Activated naive CD4-positive, alpha-beta T cell treated with anti-CD3 and anti-CD28 coated beads, Interleukin-2, amount 10 ng/mL, durations not matched to agents 7 days and 5 days (primary cell): ENCODE measurements at regions of chr21 and their contacts with region 1.

Region 1: DNA sequence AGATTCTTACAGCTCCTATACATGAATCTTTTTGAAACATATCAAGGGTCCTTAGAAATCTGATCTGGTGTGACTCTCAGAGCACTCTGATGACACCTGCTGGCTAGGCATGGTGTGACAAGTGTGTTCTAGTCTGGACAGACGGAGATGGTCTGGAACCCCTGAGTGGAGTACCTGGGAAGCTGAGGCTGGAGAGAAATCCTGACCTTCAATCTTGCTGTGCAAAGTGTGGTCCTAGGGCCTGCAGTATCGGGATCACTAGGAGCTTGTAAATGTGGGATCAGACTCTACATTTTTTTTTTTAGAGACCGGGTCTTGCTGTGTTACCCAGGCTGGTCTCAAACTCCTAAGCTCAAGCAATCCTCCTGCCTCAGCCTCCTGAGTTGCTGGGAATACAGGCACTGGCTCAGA is 78.6 kb upstream of the SOD1 start:
- DNase-seq: peak; percentile 84
- H3K4me3 Mint-ChIP-seq: no peak overlapping the region
- H3K27ac Mint-ChIP-seq: no peak overlapping the region
- H3K4me1 Mint-ChIP-seq: no peaks in the 10 kb centered on the region
- H3K27me3 Mint-ChIP-seq: peaks cover 25% of the 10 kb centered on the region

Region 2: DNA sequence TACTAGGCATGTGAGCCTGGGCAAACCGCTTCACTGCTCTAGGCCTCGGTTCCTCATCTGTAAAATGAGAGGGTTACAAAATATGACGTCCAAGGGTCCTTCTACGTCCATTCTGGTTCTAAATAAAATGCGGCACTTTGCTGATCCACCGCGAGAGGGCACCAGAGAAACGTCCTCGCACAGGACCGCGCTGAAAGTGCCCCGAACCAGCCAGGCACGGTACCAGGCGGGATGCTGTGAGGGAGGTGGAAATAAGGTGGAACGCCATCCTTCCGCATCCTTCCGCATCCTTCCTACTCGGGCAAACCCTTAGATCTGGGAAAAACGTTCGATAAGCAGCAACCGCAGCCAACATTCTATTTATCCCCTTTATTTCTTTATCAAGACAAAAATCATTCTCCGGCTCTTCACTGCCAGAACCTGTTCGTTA is 482.3 kb before region 1 on chr21:
- CTCF ChIA-PET with region 1: interaction called, 26 read pairs
- DNase-seq: peak; percentile 82
- H3K4me3 Mint-ChIP-seq: no peak overlapping the region
- H3K27ac Mint-ChIP-seq: no peak overlapping the region
- H3K4me1 Mint-ChIP-seq: peaks cover 26% of the 10 kb centered on the region
- H3K27me3 Mint-ChIP-seq: peaks cover 5% of the 10 kb centered on the region

Region 3: DNA sequence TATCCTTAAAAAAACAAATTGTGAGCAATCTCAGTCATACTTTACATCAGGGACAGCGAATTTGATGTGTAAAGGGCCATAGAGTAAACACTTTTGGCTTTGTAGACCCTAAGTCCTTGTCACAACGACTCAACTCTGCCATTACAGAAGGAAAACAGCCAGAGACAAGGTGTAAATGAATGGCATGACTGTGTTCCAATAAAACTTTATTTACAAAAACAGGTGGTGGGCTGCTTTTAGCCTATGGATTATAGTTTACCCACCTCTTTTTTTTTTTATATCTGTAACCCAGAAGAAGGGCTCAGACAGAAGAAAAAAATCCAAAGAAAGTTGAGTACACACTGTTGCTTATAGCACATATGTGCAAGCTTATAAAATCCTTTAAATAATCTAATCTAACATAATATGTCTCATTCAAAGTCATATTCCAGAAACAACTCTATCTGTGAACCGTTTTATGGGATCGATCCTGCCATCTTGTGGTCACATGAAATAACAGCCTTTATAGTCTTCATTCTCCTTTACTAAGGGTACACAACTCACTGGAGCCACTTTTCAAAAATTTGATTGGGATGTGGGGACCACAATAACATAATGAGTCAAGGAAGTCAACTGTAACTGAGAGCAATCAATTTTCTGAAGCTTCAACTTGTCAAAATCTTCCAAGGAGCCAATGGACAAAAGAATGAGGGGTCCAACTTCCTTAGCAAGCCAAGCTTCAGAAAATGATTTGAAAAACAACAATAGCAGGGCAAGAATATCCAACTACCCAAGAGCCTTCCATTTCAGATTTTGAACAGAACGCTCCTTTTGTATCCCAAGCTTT is 400.4 kb before region 1 on chr21:
- CTCF ChIA-PET with region 1: interaction called, 21 read pairs
- DNase-seq: no peak
- H3K4me3 Mint-ChIP-seq: peak overlapping the region; percentile 77
- H3K27ac Mint-ChIP-seq: peak overlapping the region; percentile 97
- H3K4me1 Mint-ChIP-seq: peaks cover 81% of the 10 kb centered on the region
- H3K27me3 Mint-ChIP-seq: no peaks in the 10 kb centered on the region

Region 4: DNA sequence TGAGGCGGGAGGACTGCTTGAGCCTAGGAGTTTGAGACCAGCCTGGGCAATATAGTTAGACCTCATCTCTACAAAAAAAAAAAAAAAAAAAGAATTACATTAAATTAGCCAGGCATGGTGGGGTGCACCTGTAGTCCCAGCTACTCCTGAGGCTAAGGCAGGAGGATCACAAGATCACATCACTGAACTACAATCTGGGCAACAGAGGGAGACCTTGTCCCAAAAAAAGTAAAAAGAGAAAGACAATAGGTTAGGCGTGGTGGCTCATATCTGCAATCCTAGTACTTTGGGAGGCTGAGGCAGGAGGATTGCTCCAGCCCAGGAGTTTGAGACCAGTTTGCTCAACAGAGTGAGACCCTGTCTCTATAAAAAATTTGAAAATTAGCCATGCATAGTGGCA is 367.1 kb before region 1 on chr21:
- CTCF ChIA-PET with region 1: interaction called, 22 read pairs
- DNase-seq: peak; percentile 23
- H3K4me3 Mint-ChIP-seq: no peak overlapping the region
- H3K27ac Mint-ChIP-seq: no peak overlapping the region
- H3K4me1 Mint-ChIP-seq: no peaks in the 10 kb centered on the region
- H3K27me3 Mint-ChIP-seq: no peaks in the 10 kb centered on the region

Region 5: GRCh38 chr21:31343680-31344480 is 237.0 kb before region 1 on chr21 and contains the start of gene TIAM1:
- CTCF ChIA-PET with region 1: interaction called, 16 read pairs
- DNase-seq: peak; percentile 27
- H3K4me3 Mint-ChIP-seq: peak within 1 kb of the TSS; percentile 81
- H3K27ac Mint-ChIP-seq: peak within 1 kb of the TSS; percentile 58
- H3K4me1 Mint-ChIP-seq: peaks cover 60% of the 10 kb centered on the region
- H3K27me3 Mint-ChIP-seq: peaks cover 32% of the 10 kb centered on the region